ENCODE measurements at regions of chr2 and their contacts with region 1.

Region 1: DNA sequence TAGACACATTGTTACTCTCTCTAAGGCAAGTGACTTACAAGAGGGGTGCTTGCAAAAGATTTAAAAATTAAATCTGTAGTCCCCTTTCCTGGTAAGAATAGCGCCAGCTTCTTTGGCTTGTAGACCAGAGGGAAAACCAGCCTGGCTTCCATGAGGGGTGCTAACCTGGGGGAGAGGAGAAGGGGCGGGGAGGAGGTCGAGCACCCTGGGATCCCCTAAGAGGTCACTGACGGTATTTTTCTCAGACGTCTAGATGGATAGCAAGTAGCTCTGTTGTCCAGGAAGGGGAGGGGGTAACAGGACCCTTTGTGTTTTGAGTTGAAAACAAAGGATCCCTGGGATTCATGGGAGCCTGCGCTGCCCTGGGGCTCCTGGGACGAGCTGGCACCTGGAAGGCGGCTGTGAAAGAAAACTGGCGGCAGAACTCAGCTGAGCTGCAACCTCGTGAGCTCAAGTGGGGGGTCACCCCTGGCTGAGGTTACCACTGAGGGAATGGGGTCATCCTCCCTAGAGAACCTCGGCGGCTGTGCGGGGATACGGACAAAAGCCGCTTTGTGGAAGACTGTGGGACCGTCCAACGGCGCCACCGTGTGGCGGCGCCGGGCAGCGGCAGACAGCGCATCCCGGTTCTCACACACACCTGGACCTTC is 37.8 kb upstream of the MRPL19 start:
- DNase-seq: peak; percentile 24
- ATAC-seq: peak; percentile 98
- H3K4me3 ChIP-seq: peak overlapping the region; percentile 25 to 26; a peak in 3 of 4 replicates
- H3K27ac ChIP-seq: no peak overlapping the region
- H3K4me1 ChIP-seq: peaks cover 5 to 10% of the 10 kb centered on the region in 2 experiments
- H3K27me3 ChIP-seq: peaks cover 17% of the 10 kb centered on the region; the same call in 1 of the 2 replicates
- CTCF ChIP-seq: peak; percentile 79 to 98 (median 95)
- POLR2A ChIP-seq: no peak
- RAD21 ChIP-seq: peak; percentile 86

Region 2: GRCh38 chr2:75064691-75065396 is 544.0 kb before region 1 on chr2:
- CTCF ChIA-PET with region 1: no interaction called
- POLR2A ChIA-PET with region 1: no interaction called
- RAD21 ChIA-PET with region 1: no interaction called
- intact Hi-C with region 1: loop called (anchors 10 kb)
- DNase-seq: peak; percentile 31
- ATAC-seq: peak; percentile 96
- H3K4me3 ChIP-seq: no peak overlapping the region
- H3K27ac ChIP-seq: no peak overlapping the region
- H3K4me1 ChIP-seq: no peaks in the 10 kb centered on the region
- H3K27me3 ChIP-seq: peaks cover 5% of the 10 kb centered on the region; the same call in 1 of the 2 replicates
- CTCF ChIP-seq: peak; percentile 64 to 99 (median 93); a peak in 5 of 6 replicates
- POLR2A ChIP-seq: no peak
- RAD21 ChIP-seq: peak; percentile 61

Region 3: GRCh38 chr2:75466708-75467311 is 142.0 kb before region 1 on chr2:
- CTCF ChIA-PET with region 1: interaction called, 13 read pairs
- POLR2A ChIA-PET with region 1: no interaction called
- RAD21 ChIA-PET with region 1: no interaction called
- intact Hi-C with region 1: loop called (anchors 1 kb)
- DNase-seq: peak; percentile 23
- ATAC-seq: peak; percentile 77
- H3K4me3 ChIP-seq: no peak overlapping the region
- H3K27ac ChIP-seq: no peak overlapping the region
- H3K4me1 ChIP-seq: no peaks in the 10 kb centered on the region
- H3K27me3 ChIP-seq: peaks cover 47% of the 10 kb centered on the region
- CTCF ChIP-seq: peak; percentile 34 to 81 (median 66); a peak in 5 of 6 replicates
- POLR2A ChIP-seq: no peak
- RAD21 ChIP-seq: peak; percentile 55

Region 4: GRCh38 chr2:75688196-75688595 is 79.4 kb after region 1 on chr2:
- CTCF ChIA-PET with region 1: no interaction called
- POLR2A ChIA-PET with region 1: no interaction called
- RAD21 ChIA-PET with region 1: no interaction called
- intact Hi-C with region 1: no loop called
- DNase-seq: no peak
- ATAC-seq: no peak
- H3K4me3 ChIP-seq: no peak overlapping the region
- H3K27ac ChIP-seq: no peak overlapping the region
- H3K4me1 ChIP-seq: no peaks in the 10 kb centered on the region
- H3K27me3 ChIP-seq: no peaks in the 10 kb centered on the region
- CTCF ChIP-seq: no peak
- POLR2A ChIP-seq: no peak
- RAD21 ChIP-seq: no peak

Measured in HCT116 (cell line).